ENCODE measurements at regions of chr4 and their contacts with region 1.

Region 1: GRCh38 chr4:80202190-80202711 is 4.9 kb downstream of the PRDM8 start:
- DNase-seq: peak; percentile 77
- H3K4me3 ChIP-seq: peak overlapping the region; percentile 43 to 48 (median 47)
- H3K27ac ChIP-seq: no peak overlapping the region
- H3K4me1 ChIP-seq: peaks cover 18% of the 10 kb centered on the region
- H3K27me3 ChIP-seq: peaks cover 36 to 45% of the 10 kb centered on the region in 2 experiments
- CTCF ChIP-seq: peak; percentile 76 to 84
- POLR2A ChIP-seq: no peak

Region 2: GRCh38 chr4:78951862-78952472 is 1250.3 kb before region 1 on chr4:
- CTCF ChIA-PET with region 1: interaction called, 3 read pairs
- POLR2A ChIA-PET with region 1: no interaction called
- dilution Hi-C with region 1: no loop called
- intact Hi-C with region 1: loop called (anchors 5 kb)
- DNase-seq: peak; percentile 42
- H3K4me3 ChIP-seq: no peak overlapping the region
- H3K27ac ChIP-seq: no peak overlapping the region
- H3K4me1 ChIP-seq: no peaks in the 10 kb centered on the region
- H3K27me3 ChIP-seq: peaks cover 5 to 9% of the 10 kb centered on the region in 2 experiments
- CTCF ChIP-seq: peak; percentile 47 to 50
- POLR2A ChIP-seq: no peak

Region 3: GRCh38 chr4:79723507-79723906 is 478.7 kb before region 1 on chr4:
- CTCF ChIA-PET with region 1: no interaction called
- POLR2A ChIA-PET with region 1: no interaction called
- dilution Hi-C with region 1: no loop called
- intact Hi-C with region 1: no loop called
- DNase-seq: no peak
- H3K4me3 ChIP-seq: no peak overlapping the region
- H3K27ac ChIP-seq: no peak overlapping the region
- H3K4me1 ChIP-seq: no peaks in the 10 kb centered on the region
- H3K27me3 ChIP-seq: no peaks in the 10 kb centered on the region
- CTCF ChIP-seq: no peak
- POLR2A ChIP-seq: no peak

Region 4: DNA sequence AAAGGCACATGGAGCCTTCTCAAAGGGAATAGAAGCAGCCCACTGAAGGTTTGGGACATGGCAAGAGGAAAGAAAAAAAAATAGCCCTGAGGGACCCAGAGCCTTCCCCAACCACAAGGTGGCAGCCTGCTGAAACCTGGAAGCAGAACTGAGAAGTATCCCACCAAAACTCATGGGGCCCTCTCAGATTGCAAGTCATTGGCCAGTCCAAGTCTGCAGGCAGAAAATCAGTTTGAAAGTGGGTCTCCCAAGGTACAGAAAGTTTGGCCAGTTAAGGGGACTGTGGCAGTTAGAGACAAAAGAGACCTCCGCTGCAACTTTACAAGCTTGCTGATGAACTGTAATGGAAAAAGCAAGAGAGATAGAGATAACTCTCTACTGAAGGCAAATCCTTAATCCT is 285.0 kb before region 1 on chr4:
- CTCF ChIA-PET with region 1: interaction called, 7 read pairs
- POLR2A ChIA-PET with region 1: no interaction called
- dilution Hi-C with region 1: no loop called
- intact Hi-C with region 1: loop called (anchors 5 kb)
- DNase-seq: peak; percentile 62
- H3K4me3 ChIP-seq: no peak overlapping the region
- H3K27ac ChIP-seq: no peak overlapping the region
- H3K4me1 ChIP-seq: no peaks in the 10 kb centered on the region
- H3K27me3 ChIP-seq: no peaks in the 10 kb centered on the region
- CTCF ChIP-seq: peak; percentile 73 to 78
- POLR2A ChIP-seq: no peak

Region 5: DNA sequence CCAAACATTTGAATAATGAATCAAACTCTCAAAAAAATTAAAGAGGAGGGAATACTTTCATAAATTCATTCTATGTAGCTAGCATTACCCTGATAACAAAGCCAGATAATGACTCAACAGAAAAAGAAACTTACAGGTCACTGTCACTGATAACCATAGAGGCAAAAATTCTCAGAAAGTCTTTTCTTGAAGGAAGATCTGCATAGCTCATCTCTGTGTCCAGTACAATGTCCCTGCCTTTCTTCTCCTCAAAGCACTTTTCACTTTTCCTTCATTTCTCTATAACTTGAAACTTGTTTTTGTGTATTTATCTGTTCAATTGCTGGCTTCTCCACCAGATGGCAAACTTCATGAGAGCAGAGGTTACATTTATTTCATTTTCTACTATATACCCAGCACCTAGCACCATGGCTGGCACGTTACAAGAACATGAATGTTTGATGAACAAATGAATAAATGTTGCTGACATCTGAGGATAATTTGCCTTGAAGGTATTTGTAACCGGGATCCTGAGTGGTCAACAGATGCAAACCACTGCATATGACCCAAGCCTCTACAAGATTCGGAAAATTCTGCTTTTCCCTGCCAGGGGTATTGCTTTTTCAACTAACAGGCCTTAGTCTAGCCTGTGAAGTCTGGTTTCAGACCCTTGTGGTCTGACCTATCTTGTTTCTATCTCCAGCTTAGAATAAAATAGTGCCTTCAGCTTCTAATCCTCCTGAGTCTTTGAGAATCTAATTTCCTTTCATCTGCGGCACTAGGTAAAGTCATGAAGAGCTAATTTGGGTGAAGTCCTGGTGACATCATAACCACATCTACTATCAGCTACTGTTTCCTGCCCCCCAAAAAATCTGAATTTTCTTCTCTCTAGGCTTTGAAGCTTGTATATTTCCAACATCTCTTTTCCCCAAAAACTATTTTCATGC is 76.7 kb before region 1 on chr4:
- CTCF ChIA-PET with region 1: interaction called, 27 read pairs
- POLR2A ChIA-PET with region 1: no interaction called
- dilution Hi-C with region 1: no loop called
- intact Hi-C with region 1: loop called (anchors 1 kb)
- DNase-seq: peak; percentile 65
- H3K4me3 ChIP-seq: no peak overlapping the region
- H3K27ac ChIP-seq: peak overlapping the region; percentile 82
- H3K4me1 ChIP-seq: peaks cover 43% of the 10 kb centered on the region
- H3K27me3 ChIP-seq: no peaks in the 10 kb centered on the region
- CTCF ChIP-seq: peak; percentile 40
- POLR2A ChIP-seq: no peak

Region 6: GRCh38 chr4:80215449-80216052 is 13.3 kb after region 1 on chr4:
- CTCF ChIA-PET with region 1: interaction called, 32 read pairs
- POLR2A ChIA-PET with region 1: no interaction called
- dilution Hi-C with region 1: no loop called
- intact Hi-C with region 1: loop called (anchors 1 kb)
- DNase-seq: peak; percentile 44
- H3K4me3 ChIP-seq: no peak overlapping the region
- H3K27ac ChIP-seq: no peak overlapping the region
- H3K4me1 ChIP-seq: no peaks in the 10 kb centered on the region
- H3K27me3 ChIP-seq: peaks cover 20 to 47% of the 10 kb centered on the region in 2 experiments
- CTCF ChIP-seq: peak; percentile 33 to 38
- POLR2A ChIP-seq: no peak

Region 7: GRCh38 chr4:80322716-80323115 is 120.5 kb after region 1 on chr4:
- CTCF ChIA-PET with region 1: interaction called, 14 read pairs
- POLR2A ChIA-PET with region 1: no interaction called
- dilution Hi-C with region 1: no loop called
- intact Hi-C with region 1: no loop called
- DNase-seq: peak; percentile 24
- H3K4me3 ChIP-seq: no peak overlapping the region
- H3K27ac ChIP-seq: no peak overlapping the region
- H3K4me1 ChIP-seq: no peaks in the 10 kb centered on the region
- H3K27me3 ChIP-seq: no peaks in the 10 kb centered on the region
- CTCF ChIP-seq: no peak
- POLR2A ChIP-seq: no peak

Measured in endothelial cell of umbilical vein (primary cell).